Caco-2 (cell line): ENCODE measurements at regions of chr15 and their contacts with region 1.

Region 1: DNA sequence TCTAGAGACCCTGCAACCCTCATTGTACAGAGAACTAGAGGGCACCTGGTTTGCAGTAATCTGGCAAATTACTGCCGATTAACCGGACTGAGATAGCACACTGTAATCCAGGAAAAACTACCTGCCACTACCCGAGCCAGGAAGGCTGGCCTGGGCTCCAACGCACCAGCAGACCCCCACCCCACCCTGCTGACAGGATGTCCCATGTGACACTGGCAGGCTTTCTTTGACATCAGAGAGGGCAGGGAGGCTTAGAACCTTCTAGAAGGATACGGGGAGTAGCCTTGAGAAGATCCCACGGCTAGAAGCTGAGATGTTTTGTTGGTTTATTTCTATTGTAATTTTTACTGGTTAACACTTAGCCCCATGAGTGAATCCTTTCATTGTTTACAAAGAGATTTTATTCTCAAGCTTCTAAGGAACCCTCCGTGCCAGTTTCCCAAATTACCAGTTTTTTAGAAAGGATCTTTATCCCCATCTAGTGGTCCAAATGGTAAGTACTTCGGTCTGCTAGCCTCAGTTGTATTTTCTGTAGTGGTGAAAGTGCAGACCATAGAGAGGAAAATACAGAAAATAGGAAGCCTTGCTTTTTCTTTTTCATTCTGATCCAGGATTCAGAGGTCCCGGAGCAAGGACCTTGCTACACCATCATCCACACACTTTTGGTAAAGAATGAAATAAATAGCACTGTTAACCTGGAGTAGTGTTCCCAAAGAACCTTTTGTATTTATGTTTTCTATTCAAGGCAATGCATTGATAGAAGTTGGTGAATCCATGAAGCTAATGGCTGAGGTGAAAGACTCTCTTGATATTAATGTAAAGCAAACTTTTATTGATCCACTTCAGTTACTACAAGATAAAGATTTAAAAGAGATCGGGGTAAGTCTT is 81.9 kb upstream of the ADAMTSL3 start:
- DNase-seq: peak in 1 of 2 experiments; percentile 14
- H3K4me3 ChIP-seq: no peak overlapping the region
- H3K4me3 Mint-ChIP-seq: no peak overlapping the region
- H3K27ac Mint-ChIP-seq: no peak overlapping the region
- H3K4me1 ChIP-seq: no peaks in the 10 kb centered on the region
- H3K4me1 Mint-ChIP-seq: no peaks in the 10 kb centered on the region
- H3K27me3 ChIP-seq: no peaks in the 10 kb centered on the region; the same call in 1 of the 2 replicates
- H3K27me3 Mint-ChIP-seq: peaks cover 6% of the 10 kb centered on the region
- CTCF ChIP-seq: peak; percentile 50 to 51

Region 2: GRCh38 chr15:83462953-83463433 is 109.1 kb before region 1 on chr15:
- CTCF ChIA-PET with region 1: interaction called, 11 read pairs
- POLR2A ChIA-PET with region 1: no interaction called
- intact Hi-C with region 1: no loop called
- DNase-seq: peak; percentile 54 to 63
- H3K4me3 ChIP-seq: no peak overlapping the region
- H3K4me3 Mint-ChIP-seq: no peak overlapping the region
- H3K27ac Mint-ChIP-seq: peak overlapping the region; percentile 55
- H3K4me1 ChIP-seq: peaks cover 28% of the 10 kb centered on the region
- H3K4me1 Mint-ChIP-seq: peaks cover 12% of the 10 kb centered on the region
- H3K27me3 ChIP-seq: no peaks in the 10 kb centered on the region
- H3K27me3 Mint-ChIP-seq: no peaks in the 10 kb centered on the region
- CTCF ChIP-seq: no peak

Region 3: GRCh38 chr15:83709246-83709645 is 137.2 kb after region 1 on chr15:
- CTCF ChIA-PET with region 1: no interaction called
- POLR2A ChIA-PET with region 1: no interaction called
- intact Hi-C with region 1: no loop called
- DNase-seq: no peak
- H3K4me3 ChIP-seq: no peak overlapping the region
- H3K4me3 Mint-ChIP-seq: no peak overlapping the region
- H3K27ac Mint-ChIP-seq: no peak overlapping the region
- H3K4me1 ChIP-seq: no peaks in the 10 kb centered on the region
- H3K4me1 Mint-ChIP-seq: no peaks in the 10 kb centered on the region
- H3K27me3 ChIP-seq: no peaks in the 10 kb centered on the region
- H3K27me3 Mint-ChIP-seq: no peaks in the 10 kb centered on the region
- CTCF ChIP-seq: no peak

Region 4: DNA sequence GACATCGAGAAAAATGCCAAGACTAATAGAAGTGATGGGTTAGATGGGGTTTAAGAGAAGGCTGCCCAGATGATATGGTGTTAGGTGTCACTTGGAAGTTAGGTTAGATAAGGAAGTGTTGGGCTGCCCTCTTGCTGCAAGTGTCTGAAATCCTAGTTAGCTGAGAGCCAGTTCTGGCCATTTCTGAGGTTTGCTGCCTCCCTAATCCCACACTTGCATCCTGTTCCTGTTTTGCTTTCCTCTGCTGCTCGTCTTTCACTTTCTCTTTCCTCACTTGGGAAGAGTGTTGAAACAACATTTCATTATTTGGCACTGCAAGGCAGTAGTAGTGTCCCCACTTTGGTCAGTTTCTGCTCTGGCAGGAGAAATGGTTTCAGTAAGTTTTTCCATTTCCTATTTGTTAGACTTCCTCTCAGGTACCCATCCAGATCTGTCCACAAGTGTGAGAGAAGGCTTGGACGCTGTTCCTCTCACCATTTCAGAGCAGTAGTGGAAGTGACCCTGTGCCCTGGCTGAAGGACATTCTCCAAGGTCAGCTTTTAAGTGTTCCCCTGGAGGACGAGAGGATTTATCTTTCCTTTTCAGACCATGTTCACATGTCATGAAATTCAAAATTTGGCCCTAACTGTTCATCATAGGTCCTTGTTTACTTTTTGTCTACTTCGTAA is 175.1 kb after region 1 on chr15:
- CTCF ChIA-PET with region 1: no interaction called
- POLR2A ChIA-PET with region 1: no interaction called
- intact Hi-C with region 1: loop called (anchors 5 kb)
- DNase-seq: no peak
- H3K4me3 ChIP-seq: no peak overlapping the region
- H3K4me3 Mint-ChIP-seq: no peak overlapping the region
- H3K27ac Mint-ChIP-seq: no peak overlapping the region
- H3K4me1 ChIP-seq: no peaks in the 10 kb centered on the region
- H3K4me1 Mint-ChIP-seq: no peaks in the 10 kb centered on the region
- H3K27me3 ChIP-seq: no peaks in the 10 kb centered on the region
- H3K27me3 Mint-ChIP-seq: peaks cover 8% of the 10 kb centered on the region
- CTCF ChIP-seq: peak in 1 of 2 experiments; percentile 11

Region 5: DNA sequence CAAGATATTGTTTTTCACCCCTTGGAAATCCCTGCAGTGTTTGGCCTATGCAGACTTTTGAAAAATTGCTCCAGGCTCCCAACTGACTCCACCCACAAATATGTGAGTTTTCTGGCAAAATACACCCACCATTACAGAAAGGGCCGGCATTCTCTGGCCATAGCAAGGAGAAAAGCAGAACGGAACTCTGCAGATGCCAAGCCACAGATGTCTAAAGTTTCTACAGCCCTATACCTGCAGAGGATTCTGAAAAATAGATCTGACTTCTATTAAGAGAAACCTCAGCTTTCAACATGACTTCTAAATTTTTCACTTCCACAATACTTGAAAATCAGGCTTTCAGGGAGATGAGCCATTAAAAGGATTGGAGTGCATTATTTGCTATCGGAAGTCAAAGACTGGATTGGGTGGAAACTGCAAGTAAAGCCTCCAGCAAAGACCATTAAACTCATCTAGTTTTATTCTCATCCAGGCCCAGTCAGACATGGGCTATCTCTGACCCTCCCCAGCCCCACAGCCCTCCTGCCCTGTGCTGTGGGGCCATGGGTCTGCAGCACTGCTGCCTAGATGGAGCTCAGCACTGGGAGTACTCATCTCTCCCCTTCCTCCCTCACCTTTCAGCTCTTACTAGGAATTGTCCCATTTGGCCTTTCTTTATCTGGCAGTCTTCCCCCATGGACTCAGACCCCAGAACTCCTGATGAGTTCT is 420.4 kb after region 1 on chr15:
- CTCF ChIA-PET with region 1: no interaction called
- POLR2A ChIA-PET with region 1: no interaction called
- intact Hi-C with region 1: no loop called
- DNase-seq: no peak
- H3K4me3 ChIP-seq: no peak overlapping the region
- H3K4me3 Mint-ChIP-seq: no peak overlapping the region
- H3K27ac Mint-ChIP-seq: no peak overlapping the region
- H3K4me1 ChIP-seq: no peaks in the 10 kb centered on the region
- H3K4me1 Mint-ChIP-seq: no peaks in the 10 kb centered on the region
- H3K27me3 ChIP-seq: no peaks in the 10 kb centered on the region
- H3K27me3 Mint-ChIP-seq: peaks cover under 1% of the 10 kb centered on the region
- CTCF ChIP-seq: no peak